ENCODE measurements at regions of chr1 and their contacts with region 1.

Region 1: DNA sequence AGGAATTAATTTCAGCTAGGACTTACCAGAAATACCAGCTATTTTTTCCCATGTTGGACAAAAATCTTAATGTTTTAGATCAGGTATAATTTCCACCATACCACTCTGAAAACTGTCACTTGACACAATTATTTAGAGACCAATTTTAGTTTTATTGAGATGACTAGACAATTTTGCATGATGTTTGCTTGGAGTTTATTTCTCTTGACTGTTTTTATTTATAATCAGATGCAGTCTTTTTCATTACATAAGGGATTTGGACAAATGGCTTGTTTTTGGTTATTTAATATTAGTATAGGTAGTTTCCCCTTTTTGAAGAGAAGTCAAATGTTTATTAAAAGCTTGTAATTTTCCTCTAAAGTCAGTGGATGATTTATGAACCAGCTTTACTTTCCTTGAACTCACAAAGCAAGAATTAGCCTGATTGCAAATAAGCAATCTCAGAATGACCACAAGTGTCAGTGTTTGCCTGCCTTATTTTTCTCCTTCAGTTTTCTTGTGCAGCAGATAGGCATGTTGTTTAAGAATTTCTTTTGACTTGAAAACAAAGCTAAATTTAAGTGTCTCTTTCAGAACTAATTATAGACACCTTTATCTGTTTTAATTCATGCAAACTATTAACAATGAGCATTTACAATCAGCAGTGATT is 3.8 kb upstream of the B3GALT2 start:
- DNase-seq: no peak
- H3K4me3 ChIP-seq: no peak overlapping the region
- H3K4me3 Mint-ChIP-seq: no peak overlapping the region
- H3K27ac Mint-ChIP-seq: no peak overlapping the region
- H3K4me1 ChIP-seq: peaks cover 11% of the 10 kb centered on the region
- H3K4me1 Mint-ChIP-seq: peaks cover 9% of the 10 kb centered on the region
- H3K27me3 ChIP-seq: no peaks in the 10 kb centered on the region
- H3K27me3 Mint-ChIP-seq: no peaks in the 10 kb centered on the region
- CTCF ChIP-seq: peak in 1 of 2 experiments; percentile 12

Region 2: GRCh38 chr1:193201021-193201420 is 10.8 kb after region 1 on chr1:
- CTCF ChIA-PET with region 1: no interaction called
- POLR2A ChIA-PET with region 1: no interaction called
- intact Hi-C with region 1: no loop called
- DNase-seq: no peak
- H3K4me3 ChIP-seq: no peak overlapping the region
- H3K4me3 Mint-ChIP-seq: no peak overlapping the region
- H3K27ac Mint-ChIP-seq: no peak overlapping the region
- H3K4me1 ChIP-seq: no peaks in the 10 kb centered on the region
- H3K4me1 Mint-ChIP-seq: peaks cover 16% of the 10 kb centered on the region
- H3K27me3 ChIP-seq: no peaks in the 10 kb centered on the region
- H3K27me3 Mint-ChIP-seq: no peaks in the 10 kb centered on the region
- CTCF ChIP-seq: no peak

Region 3: DNA sequence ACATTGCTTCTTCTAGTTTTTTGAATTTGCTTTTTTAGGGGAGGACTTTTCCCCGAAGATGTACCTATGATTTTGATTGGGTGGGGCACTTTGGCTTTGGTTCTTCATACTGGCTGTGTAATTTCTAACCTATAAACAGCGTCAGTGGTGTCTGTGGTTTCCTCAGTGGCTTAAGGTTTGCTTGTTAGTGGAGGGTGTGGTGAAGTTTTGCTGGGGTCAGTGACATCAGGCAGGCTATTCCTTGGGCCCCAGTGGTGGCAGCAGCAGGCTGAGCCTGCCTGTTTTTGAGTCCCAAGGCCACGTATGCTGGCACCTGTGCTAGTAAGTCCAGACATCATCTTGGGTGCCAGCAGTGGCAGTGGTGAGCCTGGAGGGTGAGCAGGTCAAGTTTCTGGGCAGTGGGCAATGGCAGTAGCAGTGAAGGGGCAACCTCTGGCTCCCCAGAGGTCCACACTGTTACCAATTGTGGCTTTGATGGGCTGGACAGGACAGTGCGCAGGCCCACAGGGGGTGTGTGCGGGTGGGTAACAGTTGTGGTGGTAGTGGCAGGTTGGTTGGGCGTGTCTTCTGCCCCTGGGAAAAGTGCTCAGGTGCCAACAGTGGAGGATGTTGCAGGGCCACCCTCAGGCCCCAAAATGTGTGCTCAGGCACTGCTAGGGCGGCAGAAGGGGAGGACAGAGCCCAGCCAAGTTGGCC is 51.1 kb after region 1 on chr1:
- CTCF ChIA-PET with region 1: no interaction called
- POLR2A ChIA-PET with region 1: no interaction called
- intact Hi-C with region 1: no loop called
- DNase-seq: no peak
- H3K4me3 ChIP-seq: no peak overlapping the region
- H3K4me3 Mint-ChIP-seq: no peak overlapping the region
- H3K27ac Mint-ChIP-seq: peak overlapping the region; percentile 48
- H3K4me1 ChIP-seq: peaks cover 7% of the 10 kb centered on the region
- H3K4me1 Mint-ChIP-seq: peaks cover 13% of the 10 kb centered on the region
- H3K27me3 ChIP-seq: no peaks in the 10 kb centered on the region
- H3K27me3 Mint-ChIP-seq: no peaks in the 10 kb centered on the region
- CTCF ChIP-seq: no peak

Region 4: DNA sequence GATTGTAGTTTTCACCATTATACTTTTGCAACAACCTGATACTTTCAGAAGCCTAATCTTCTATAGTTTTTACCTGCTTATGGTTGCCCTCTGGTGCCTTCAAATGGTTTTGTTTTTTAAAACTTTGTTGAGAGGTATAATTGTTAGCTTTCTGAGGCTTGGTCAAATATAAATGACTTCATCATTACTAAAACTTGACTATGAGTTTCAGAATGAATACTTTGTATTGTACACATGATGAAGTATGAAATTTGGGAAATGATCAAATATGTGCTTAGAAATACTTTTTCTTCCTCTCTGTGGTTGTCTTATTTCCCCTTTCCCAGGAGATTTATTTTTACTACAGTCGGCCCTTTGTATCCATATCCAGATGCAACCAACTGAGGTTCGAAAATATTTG is 148.0 kb after region 1 on chr1:
- CTCF ChIA-PET with region 1: no interaction called
- POLR2A ChIA-PET with region 1: no interaction called
- intact Hi-C with region 1: loop called (anchors 1 kb)
- DNase-seq: no peak
- H3K4me3 ChIP-seq: no peak overlapping the region
- H3K4me3 Mint-ChIP-seq: no peak overlapping the region
- H3K27ac Mint-ChIP-seq: no peak overlapping the region
- H3K4me1 ChIP-seq: peaks cover 28% of the 10 kb centered on the region
- H3K4me1 Mint-ChIP-seq: peaks cover 6% of the 10 kb centered on the region
- H3K27me3 ChIP-seq: no peaks in the 10 kb centered on the region
- H3K27me3 Mint-ChIP-seq: no peaks in the 10 kb centered on the region
- CTCF ChIP-seq: peak; percentile 9 to 18

Measured in Caco-2 (cell line).